ENCODE measurements at regions of chr14 and their contacts with region 1.

Region 1: DNA sequence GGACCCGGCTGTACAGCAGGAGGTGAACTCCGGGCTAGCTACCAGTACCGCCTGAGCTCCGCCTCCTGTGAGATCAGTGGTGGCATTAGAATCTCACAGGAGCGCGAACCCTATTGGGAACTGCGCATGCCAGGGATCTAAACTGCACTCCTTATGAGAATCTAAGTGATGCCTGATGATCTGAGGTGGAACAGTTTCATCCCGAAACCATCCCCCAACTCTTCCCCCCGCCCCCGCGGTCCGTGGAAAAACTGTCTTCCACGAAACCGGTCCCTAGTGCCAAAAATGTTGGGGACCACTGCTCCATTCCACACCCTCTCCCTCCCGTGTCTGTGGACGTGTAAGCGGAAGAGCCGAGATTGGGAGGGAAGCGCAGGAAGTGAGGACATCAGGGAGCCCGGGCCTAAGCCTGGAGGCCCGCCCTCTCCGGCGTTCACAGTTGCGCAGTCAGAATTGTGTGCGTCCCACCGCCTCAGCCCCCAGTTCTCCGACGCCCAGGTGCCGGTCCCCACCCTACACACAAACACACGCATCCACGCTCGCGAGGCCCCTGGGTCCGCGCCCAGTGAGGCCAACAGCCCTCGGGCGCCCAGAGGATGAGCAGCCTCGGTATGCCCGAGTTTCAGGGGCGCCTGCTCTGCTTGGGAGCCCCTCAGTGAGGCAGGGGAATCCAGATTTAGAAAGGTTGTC is 1.8 kb upstream of the RNASE4 start:
- DNase-seq: peak; percentile 83
- CTCF ChIP-seq: no peak

Region 2: DNA sequence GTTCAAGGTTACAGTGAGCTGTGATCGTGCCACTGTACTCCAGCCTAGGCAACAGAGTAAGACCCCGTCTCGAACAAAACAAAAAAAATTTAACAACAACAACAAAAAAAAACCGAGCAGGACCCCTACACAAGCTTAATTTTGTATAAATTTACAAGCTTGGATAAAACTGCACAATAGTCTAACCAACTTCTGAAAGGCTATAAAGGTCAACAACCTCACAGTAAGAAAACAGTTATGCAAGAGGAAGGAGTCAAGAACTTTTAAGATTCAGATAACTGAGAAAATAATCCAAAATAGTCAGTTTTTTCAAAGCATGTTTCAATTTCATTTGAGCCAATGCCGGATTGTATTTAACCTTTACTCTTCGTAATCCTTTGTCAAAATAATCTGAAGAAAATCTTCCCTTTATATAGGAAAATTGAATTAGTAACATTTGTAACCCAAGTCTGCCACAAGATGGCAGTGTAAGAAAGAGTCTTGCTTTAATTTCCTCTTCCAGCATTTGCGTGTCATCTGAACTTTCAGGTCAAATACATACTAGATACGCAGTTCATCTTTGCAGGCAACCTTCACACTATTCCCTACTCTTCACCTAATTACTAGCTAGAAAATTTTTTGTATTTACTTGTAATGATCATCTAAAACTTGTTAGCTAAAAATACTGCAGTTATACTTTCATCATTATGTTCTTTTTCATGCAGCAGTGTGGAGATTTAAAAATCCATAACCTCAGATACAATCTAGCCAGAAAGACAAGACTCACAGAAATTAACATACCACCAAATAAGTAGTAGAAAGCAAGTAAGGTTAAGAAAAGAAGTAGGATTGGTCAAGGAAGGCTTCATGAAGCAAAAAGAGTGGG is 355.3 kb before region 1 on chr14:
- in situ Hi-C with region 1: loop called (anchors 10 kb)
- DNase-seq: peak; percentile 62
- CTCF ChIP-seq: peak; percentile 60

Region 3: DNA sequence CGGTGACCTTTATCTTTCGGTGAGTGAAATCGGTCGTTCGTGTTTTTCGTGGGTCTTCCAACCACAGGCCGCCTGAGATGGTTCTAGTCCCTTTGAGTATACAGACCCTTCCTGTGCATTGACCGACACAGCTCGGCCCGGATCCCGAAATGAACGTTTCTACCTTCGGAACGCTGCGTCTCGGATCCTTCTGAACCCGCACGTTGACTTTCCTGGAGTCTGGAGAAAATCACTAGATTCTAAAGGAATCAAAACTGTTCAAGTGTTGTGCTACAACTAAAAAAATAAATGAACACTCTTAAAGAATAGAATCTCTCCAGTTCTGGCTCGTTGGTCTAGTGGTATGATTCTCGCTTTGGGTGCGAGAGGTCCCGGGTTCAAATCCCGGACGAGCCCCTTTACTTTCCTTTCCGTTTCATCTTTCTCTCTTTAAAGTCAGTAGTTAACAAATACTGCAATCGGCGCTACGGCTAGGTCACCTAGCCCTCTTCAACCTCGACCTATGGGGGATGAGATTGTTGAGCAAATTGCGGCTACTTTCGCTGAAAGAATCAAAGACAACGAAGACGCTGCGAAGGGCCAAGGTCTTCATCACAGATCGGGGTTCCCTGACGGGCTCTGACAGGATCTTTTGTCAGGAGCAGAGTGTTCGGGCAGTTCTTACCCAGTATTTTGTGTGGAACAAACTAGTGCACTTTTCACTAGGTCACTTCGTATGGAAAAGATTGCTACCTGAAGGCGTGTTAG is 49.7 kb before region 1 on chr14:
- in situ Hi-C with region 1: loop called (anchors 10 kb)
- DNase-seq: peak; percentile 80
- CTCF ChIP-seq: no peak

Region 4: DNA sequence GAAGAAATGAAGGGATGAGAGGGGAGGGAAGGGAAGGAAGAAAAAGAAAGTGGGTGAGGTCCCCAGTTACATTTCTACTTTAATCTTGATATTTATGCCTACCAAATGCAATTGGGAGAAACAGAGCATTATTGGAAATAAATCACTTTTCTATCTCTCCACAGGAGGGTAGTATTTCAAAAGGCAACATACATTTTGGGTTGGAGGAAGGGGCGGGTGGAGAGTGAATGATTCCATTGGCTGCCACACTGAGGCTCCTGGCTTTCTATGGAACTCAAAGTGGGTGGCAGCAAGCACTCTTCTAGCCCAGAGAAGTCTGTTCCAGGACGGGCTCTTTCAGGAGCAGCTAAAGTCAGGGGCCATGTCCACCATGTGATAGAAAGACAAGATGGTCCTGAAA is 1465.1 kb after region 1 on chr14:
- in situ Hi-C with region 1: no loop called
- DNase-seq: no peak
- CTCF ChIP-seq: no peak